ENCODE measurements at regions of chr1 and their contacts with region 1.

Region 1: DNA sequence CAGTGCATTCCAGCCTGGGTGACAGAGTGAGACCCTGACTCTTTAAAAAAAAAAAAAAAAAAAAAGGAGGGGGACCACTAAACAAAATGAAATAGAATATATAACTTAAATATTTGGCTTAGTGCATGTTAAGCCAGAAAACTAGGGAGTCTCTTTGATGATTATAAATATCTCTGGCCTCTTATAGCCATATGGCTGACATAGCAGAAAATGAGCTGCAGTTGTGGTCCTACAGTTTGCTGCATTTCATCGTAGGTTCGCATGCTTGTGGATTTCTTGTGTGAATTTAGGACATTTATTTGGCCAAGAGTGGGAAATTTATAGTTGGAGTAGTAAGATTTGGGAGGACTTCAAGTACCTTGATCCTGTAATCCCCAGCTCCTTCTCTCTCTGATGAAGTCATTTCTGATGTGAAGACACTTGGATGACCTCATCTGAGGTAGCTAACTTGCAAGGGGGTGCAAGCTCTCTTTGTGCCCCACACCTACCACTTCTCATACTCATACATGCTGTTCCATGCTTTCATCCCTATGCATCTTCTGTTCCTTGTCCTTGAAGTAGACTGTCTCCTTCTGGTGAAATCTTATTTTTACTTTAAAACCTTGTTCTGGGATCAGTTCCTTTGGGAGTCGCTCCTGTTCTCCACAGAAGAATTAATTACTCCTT is 6.4 kb upstream of the TIPRL start:
- DNase-seq: no peak
- H3K4me3 ChIP-seq: no peak overlapping the region
- H3K27ac ChIP-seq: no peak overlapping the region
- H3K4me1 ChIP-seq: no peaks in the 10 kb centered on the region
- H3K27me3 ChIP-seq: no peaks in the 10 kb centered on the region
- CTCF ChIP-seq: no peak

Region 2: DNA sequence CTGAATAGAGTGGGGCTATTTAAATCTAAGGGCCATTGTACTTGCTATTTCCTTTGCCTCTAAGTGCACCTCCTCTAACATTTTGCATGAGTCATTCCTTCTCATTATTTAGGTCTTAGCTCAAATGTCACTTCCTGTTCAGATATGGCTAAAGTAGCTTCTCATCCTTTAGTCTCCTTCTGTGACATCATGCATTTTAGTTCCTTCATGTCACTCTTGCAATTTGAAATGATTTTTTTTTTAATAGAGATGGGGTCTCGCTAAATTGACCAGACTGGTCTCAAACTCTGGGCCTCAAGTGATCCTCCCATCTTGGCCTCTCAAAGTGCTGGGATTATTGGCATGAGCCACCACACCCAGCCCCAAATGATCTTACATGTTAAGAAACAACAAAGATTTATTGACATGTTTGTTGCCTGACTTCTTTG is 114.9 kb after region 1 on chr1:
- CTCF ChIA-PET with region 1: no interaction called
- POLR2A ChIA-PET with region 1: no interaction called
- intact Hi-C with region 1: no loop called
- DNase-seq: peak; percentile 75
- H3K4me3 ChIP-seq: no peak overlapping the region
- H3K27ac ChIP-seq: no peak overlapping the region
- H3K4me1 ChIP-seq: no peaks in the 10 kb centered on the region
- H3K27me3 ChIP-seq: no peaks in the 10 kb centered on the region
- CTCF ChIP-seq: no peak

Region 3: GRCh38 chr1:168321945-168322344 is 149.6 kb after region 1 on chr1:
- CTCF ChIA-PET with region 1: no interaction called
- POLR2A ChIA-PET with region 1: interaction called, 18 read pairs
- intact Hi-C with region 1: no loop called
- DNase-seq: peak; percentile 37
- H3K4me3 ChIP-seq: no peak overlapping the region
- H3K27ac ChIP-seq: no peak overlapping the region
- H3K4me1 ChIP-seq: peaks cover 3% of the 10 kb centered on the region
- H3K27me3 ChIP-seq: no peaks in the 10 kb centered on the region
- CTCF ChIP-seq: peak; percentile 54

Region 4: GRCh38 chr1:168452329-168452728 is 279.9 kb after region 1 on chr1:
- CTCF ChIA-PET with region 1: no interaction called
- POLR2A ChIA-PET with region 1: no interaction called
- intact Hi-C with region 1: no loop called
- DNase-seq: no peak
- H3K4me3 ChIP-seq: no peak overlapping the region
- H3K27ac ChIP-seq: no peak overlapping the region
- H3K4me1 ChIP-seq: peaks cover 3% of the 10 kb centered on the region
- H3K27me3 ChIP-seq: no peaks in the 10 kb centered on the region
- CTCF ChIP-seq: peak; percentile 28; the same call in 1 of the 2 replicates